Caco-2 (cell line): ENCODE measurements at regions of chr13 and their contacts with region 1.

Region 1: GRCh38 chr13:48769107-48769704 is 115.5 kb downstream of the CYSLTR2 start:
- DNase-seq: peak; percentile 85 to 88
- H3K4me3 ChIP-seq: no peak overlapping the region
- H3K4me3 Mint-ChIP-seq: no peak overlapping the region
- H3K27ac Mint-ChIP-seq: no peak overlapping the region
- H3K4me1 ChIP-seq: no peaks in the 10 kb centered on the region
- H3K4me1 Mint-ChIP-seq: peaks cover 5% of the 10 kb centered on the region
- H3K27me3 ChIP-seq: no peaks in the 10 kb centered on the region; the same call in 1 of the 2 replicates
- H3K27me3 Mint-ChIP-seq: peaks cover 21% of the 10 kb centered on the region
- CTCF ChIP-seq: peak; percentile 99 to 100

Region 2: DNA sequence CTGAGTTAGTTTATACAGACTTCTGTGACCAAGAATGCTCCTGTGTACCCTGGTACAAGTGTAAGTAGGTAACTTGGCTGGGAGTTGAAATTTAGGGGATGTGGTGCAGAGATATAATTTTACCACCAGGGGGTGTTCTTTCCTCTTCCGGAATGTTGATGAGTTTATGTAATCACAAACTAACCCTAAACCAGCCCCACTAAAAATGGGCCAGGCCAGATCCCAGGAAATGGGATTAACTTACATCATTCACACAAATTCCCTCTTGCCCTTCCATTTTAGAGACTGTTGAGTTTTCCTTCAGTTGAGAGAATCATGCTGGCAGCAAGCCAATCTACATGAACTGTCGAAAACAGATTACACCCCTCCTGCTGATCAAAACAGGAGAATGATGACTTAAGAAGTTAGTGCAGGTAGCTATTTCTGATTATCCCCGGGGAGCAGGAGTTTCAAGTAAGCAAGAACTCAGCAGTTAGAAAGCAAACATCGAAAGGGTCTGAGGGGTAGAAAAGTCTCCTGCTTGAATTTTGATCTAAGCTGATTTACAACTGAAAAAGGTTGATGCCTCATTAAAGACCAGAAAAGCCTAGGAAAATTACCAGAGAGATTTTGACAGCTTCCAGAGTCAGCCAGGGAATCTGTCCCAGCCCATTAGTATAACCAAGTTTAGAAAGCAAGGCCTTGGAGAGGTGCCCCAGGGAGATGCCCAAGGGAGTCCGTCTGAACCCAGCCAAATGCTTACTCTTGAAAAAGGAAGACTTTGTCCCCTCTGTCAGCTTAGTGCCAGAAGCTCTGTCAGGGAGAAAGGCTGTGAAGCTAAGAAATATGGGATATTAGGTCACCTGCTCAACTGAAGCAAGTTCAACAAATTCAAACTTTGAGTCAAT is 642.0 kb before region 1 on chr13:
- CTCF ChIA-PET with region 1: interaction called, 6 read pairs
- POLR2A ChIA-PET with region 1: no interaction called
- intact Hi-C with region 1: loop called (anchors 1 kb)
- DNase-seq: peak in 1 of 2 experiments; percentile 61
- H3K4me3 ChIP-seq: no peak overlapping the region
- H3K4me3 Mint-ChIP-seq: no peak overlapping the region
- H3K27ac Mint-ChIP-seq: no peak overlapping the region
- H3K4me1 ChIP-seq: peaks cover 6% of the 10 kb centered on the region; the same call in 1 of the 2 replicates
- H3K4me1 Mint-ChIP-seq: no peaks in the 10 kb centered on the region
- H3K27me3 ChIP-seq: no peaks in the 10 kb centered on the region
- H3K27me3 Mint-ChIP-seq: no peaks in the 10 kb centered on the region
- CTCF ChIP-seq: peak; percentile 56 to 67

Region 3: DNA sequence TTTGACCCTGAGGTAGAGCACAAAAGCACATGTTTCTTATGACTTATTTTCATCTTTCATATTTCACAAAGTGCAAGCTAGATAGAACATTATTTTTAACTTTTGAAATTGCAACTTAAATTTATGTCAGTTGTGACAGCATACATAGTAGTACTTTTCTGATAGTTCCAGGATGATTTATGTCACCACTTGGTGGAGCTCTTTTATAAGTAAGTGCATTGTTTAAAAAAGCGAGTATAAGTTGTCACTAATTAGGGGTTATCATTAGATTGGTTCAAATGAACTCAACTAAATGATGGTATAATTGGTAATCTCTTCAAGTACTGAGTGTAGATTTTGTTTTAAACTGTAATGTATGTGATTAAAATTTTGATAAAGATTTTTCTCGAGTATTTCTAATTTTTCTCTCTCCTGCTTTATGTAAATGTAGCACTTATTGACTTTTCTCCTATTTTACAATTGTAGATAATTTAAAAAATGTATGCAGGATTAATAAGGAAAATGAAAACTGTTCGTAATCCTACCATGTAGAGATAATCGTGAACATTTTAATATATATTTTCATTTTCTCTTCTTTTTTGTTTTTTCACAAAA is 434.6 kb before region 1 on chr13:
- CTCF ChIA-PET with region 1: interaction called, 13 read pairs
- POLR2A ChIA-PET with region 1: no interaction called
- intact Hi-C with region 1: loop called (anchors 1 kb)
- DNase-seq: peak in 1 of 2 experiments; percentile 17
- H3K4me3 ChIP-seq: no peak overlapping the region
- H3K4me3 Mint-ChIP-seq: no peak overlapping the region
- H3K27ac Mint-ChIP-seq: no peak overlapping the region
- H3K4me1 ChIP-seq: no peaks in the 10 kb centered on the region
- H3K4me1 Mint-ChIP-seq: no peaks in the 10 kb centered on the region
- H3K27me3 ChIP-seq: no peaks in the 10 kb centered on the region
- H3K27me3 Mint-ChIP-seq: no peaks in the 10 kb centered on the region
- CTCF ChIP-seq: peak; percentile 29 to 55

Region 4: GRCh38 chr13:48595431-48596429 is 173.5 kb before region 1 on chr13:
- CTCF ChIA-PET with region 1: interaction called, 31 read pairs
- POLR2A ChIA-PET with region 1: no interaction called
- intact Hi-C with region 1: loop called (anchors 1 kb)
- DNase-seq: peak; percentile 65 to 78
- H3K4me3 ChIP-seq: no peak overlapping the region
- H3K4me3 Mint-ChIP-seq: no peak overlapping the region
- H3K27ac Mint-ChIP-seq: peak overlapping the region; percentile 39
- H3K4me1 ChIP-seq: no peaks in the 10 kb centered on the region; the same call in 1 of the 2 replicates
- H3K4me1 Mint-ChIP-seq: no peaks in the 10 kb centered on the region
- H3K27me3 ChIP-seq: no peaks in the 10 kb centered on the region
- H3K27me3 Mint-ChIP-seq: no peaks in the 10 kb centered on the region
- CTCF ChIP-seq: peak; percentile 70 to 80

Region 5: GRCh38 chr13:48647630-48648029 is 121.6 kb before region 1 on chr13:
- CTCF ChIA-PET with region 1: interaction called, 4 read pairs
- POLR2A ChIA-PET with region 1: no interaction called
- intact Hi-C with region 1: loop called (anchors 2 kb)
- DNase-seq: peak; percentile 47 to 49
- H3K4me3 ChIP-seq: no peak overlapping the region
- H3K4me3 Mint-ChIP-seq: no peak overlapping the region
- H3K27ac Mint-ChIP-seq: no peak overlapping the region
- H3K4me1 ChIP-seq: no peaks in the 10 kb centered on the region
- H3K4me1 Mint-ChIP-seq: no peaks in the 10 kb centered on the region
- H3K27me3 ChIP-seq: no peaks in the 10 kb centered on the region; the same call in 1 of the 2 replicates
- H3K27me3 Mint-ChIP-seq: no peaks in the 10 kb centered on the region
- CTCF ChIP-seq: peak; percentile 43 to 53

Region 6: GRCh38 chr13:48749699-48750473 is 19.3 kb before region 1 on chr13:
- CTCF ChIA-PET with region 1: interaction called, 11 read pairs
- POLR2A ChIA-PET with region 1: no interaction called
- intact Hi-C with region 1: loop called (anchors 1 kb)
- DNase-seq: peak; percentile 68 to 71
- H3K4me3 ChIP-seq: no peak overlapping the region
- H3K4me3 Mint-ChIP-seq: no peak overlapping the region
- H3K27ac Mint-ChIP-seq: no peak overlapping the region
- H3K4me1 ChIP-seq: no peaks in the 10 kb centered on the region
- H3K4me1 Mint-ChIP-seq: peaks cover 6% of the 10 kb centered on the region
- H3K27me3 ChIP-seq: no peaks in the 10 kb centered on the region
- H3K27me3 Mint-ChIP-seq: no peaks in the 10 kb centered on the region
- CTCF ChIP-seq: peak; percentile 56 to 68

Region 7: DNA sequence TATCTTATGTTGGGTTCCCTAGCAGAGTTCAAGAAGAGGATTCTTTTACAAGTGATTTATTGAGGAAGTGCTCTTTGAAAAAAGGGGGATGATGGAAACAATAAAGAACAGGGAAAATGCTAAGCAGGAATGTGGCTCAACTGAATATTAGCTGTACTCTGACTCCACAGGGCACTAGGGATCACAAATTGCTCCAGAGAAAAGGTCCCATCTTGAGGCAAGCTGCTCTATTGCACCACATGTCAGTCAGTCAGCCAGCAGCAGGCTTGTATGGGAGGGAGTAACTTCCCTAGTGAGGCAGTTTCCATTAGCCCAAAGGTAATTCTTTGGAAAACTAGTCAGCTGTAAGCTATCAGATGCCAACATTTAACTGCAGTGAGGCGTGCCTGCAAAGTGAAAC is 133.2 kb after region 1 on chr13:
- CTCF ChIA-PET with region 1: no interaction called
- POLR2A ChIA-PET with region 1: no interaction called
- intact Hi-C with region 1: no loop called
- DNase-seq: peak in 1 of 2 experiments; percentile 5
- H3K4me3 ChIP-seq: no peak overlapping the region
- H3K4me3 Mint-ChIP-seq: no peak overlapping the region
- H3K27ac Mint-ChIP-seq: no peak overlapping the region
- H3K4me1 ChIP-seq: no peaks in the 10 kb centered on the region
- H3K4me1 Mint-ChIP-seq: no peaks in the 10 kb centered on the region
- H3K27me3 ChIP-seq: no peaks in the 10 kb centered on the region
- H3K27me3 Mint-ChIP-seq: peaks cover 24% of the 10 kb centered on the region
- CTCF ChIP-seq: no peak